ENCODE measurements at regions of chr10 and their contacts with region 1.

Region 1: GRCh38 chr10:60646966-60647796 is 131.1 kb upstream of the CDK1 start:
- DNase-seq: peak; percentile 76
- H3K4me3 Mint-ChIP-seq: no peak overlapping the region
- H3K27ac Mint-ChIP-seq: no peak overlapping the region
- H3K4me1 Mint-ChIP-seq: no peaks in the 10 kb centered on the region
- H3K27me3 Mint-ChIP-seq: no peaks in the 10 kb centered on the region
- CTCF ChIP-seq: peak; percentile 70

Region 2: GRCh38 chr10:60099998-60100747 is 547.0 kb before region 1 on chr10:
- CTCF ChIA-PET with region 1: interaction called, 3 read pairs
- POLR2A ChIA-PET with region 1: no interaction called
- intact Hi-C with region 1: loop called (anchors 10 kb)
- DNase-seq: peak; percentile 63
- H3K4me3 Mint-ChIP-seq: no peak overlapping the region
- H3K27ac Mint-ChIP-seq: no peak overlapping the region
- H3K4me1 Mint-ChIP-seq: no peaks in the 10 kb centered on the region
- H3K27me3 Mint-ChIP-seq: no peaks in the 10 kb centered on the region
- CTCF ChIP-seq: peak; percentile 57

Region 3: GRCh38 chr10:60237977-60238758 is 409.0 kb before region 1 on chr10:
- CTCF ChIA-PET with region 1: no interaction called
- POLR2A ChIA-PET with region 1: no interaction called
- intact Hi-C with region 1: loop called (anchors 2 kb)
- DNase-seq: peak; percentile 52
- H3K4me3 Mint-ChIP-seq: no peak overlapping the region
- H3K27ac Mint-ChIP-seq: no peak overlapping the region
- H3K4me1 Mint-ChIP-seq: no peaks in the 10 kb centered on the region
- H3K27me3 Mint-ChIP-seq: no peaks in the 10 kb centered on the region
- CTCF ChIP-seq: no peak

Region 4: GRCh38 chr10:60549686-60550085 is 97.5 kb before region 1 on chr10:
- CTCF ChIA-PET with region 1: interaction called, 9 read pairs
- POLR2A ChIA-PET with region 1: interaction called, 5 read pairs
- intact Hi-C with region 1: loop called (anchors 1 kb)
- DNase-seq: peak; percentile 63
- H3K4me3 Mint-ChIP-seq: no peak overlapping the region
- H3K27ac Mint-ChIP-seq: no peak overlapping the region
- H3K4me1 Mint-ChIP-seq: no peaks in the 10 kb centered on the region
- H3K27me3 Mint-ChIP-seq: no peaks in the 10 kb centered on the region
- CTCF ChIP-seq: peak; percentile 34

Region 5: GRCh38 chr10:60769406-60769805 is 122.2 kb after region 1 on chr10:
- CTCF ChIA-PET with region 1: interaction called, 69 read pairs
- POLR2A ChIA-PET with region 1: interaction called, 5 read pairs
- intact Hi-C with region 1: loop called (anchors 2 kb)
- DNase-seq: no peak
- H3K4me3 Mint-ChIP-seq: no peak overlapping the region
- H3K27ac Mint-ChIP-seq: no peak overlapping the region
- H3K4me1 Mint-ChIP-seq: peaks cover 21% of the 10 kb centered on the region
- H3K27me3 Mint-ChIP-seq: no peaks in the 10 kb centered on the region
- CTCF ChIP-seq: no peak